PC-9 (cell line): ENCODE measurements at regions of chr1 and their contacts with region 1.

Region 1: DNA sequence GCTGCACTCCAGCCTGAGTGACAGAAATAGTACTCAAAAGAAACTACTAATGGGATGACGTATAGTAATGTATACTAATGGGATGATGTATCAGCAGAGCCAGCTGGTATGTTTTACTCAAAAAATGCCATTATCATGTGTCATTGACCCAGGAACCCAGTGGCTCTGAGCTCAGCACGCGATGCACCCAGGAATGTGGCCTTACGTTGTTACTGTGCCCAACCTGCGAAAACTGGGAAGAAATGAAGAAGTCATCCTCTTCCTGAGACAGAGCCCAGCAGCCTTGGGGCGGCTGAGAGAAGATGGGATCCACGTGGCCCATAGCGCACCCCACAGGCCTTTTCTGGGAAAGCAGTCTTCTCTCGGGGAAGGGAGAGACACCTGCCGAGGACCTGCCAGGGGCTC is 8.8 kb downstream of the UBE2J2 start:
- DNase-seq: peak; percentile 70 to 84
- H3K4me3 ChIP-seq: no peak overlapping the region
- H3K27ac ChIP-seq: peak overlapping the region; percentile 44; the same call in 1 of the 2 replicates
- H3K4me1 ChIP-seq: no peaks in the 10 kb centered on the region
- H3K27me3 ChIP-seq: no peaks in the 10 kb centered on the region
- CTCF ChIP-seq: peak; percentile 53

Region 2: GRCh38 chr1:1020000-1020404 is 244.9 kb before region 1 on chr1 and contains the start of gene AGRN:
- CTCF ChIA-PET with region 1: no interaction called
- POLR2A ChIA-PET with region 1: interaction called, 13 read pairs
- intact Hi-C with region 1: no loop called
- DNase-seq: peak in 1 of 2 experiments; percentile 57
- H3K4me3 ChIP-seq: peak within 1 kb of the TSS; percentile 80
- H3K27ac ChIP-seq: peak within 1 kb of the TSS; percentile 76
- H3K4me1 ChIP-seq: peaks cover 32% of the 10 kb centered on the region
- H3K27me3 ChIP-seq: no peaks in the 10 kb centered on the region
- CTCF ChIP-seq: no peak
- total RNA-seq, gene AGRN: 278 and 381 TPM in 2 replicates

Region 3: GRCh38 chr1:1122078-1122811 is 142.6 kb before region 1 on chr1:
- CTCF ChIA-PET with region 1: no interaction called
- POLR2A ChIA-PET with region 1: no interaction called
- intact Hi-C with region 1: loop called (anchors 1 kb)
- DNase-seq: peak in 1 of 2 experiments; percentile 82
- H3K4me3 ChIP-seq: peak overlapping the region; percentile 29; the same call in 1 of the 2 replicates
- H3K27ac ChIP-seq: no peak overlapping the region
- H3K4me1 ChIP-seq: peaks cover 22% of the 10 kb centered on the region
- H3K27me3 ChIP-seq: no peaks in the 10 kb centered on the region
- CTCF ChIP-seq: peak; percentile 86